BJ (cell line): ENCODE measurements at regions of chr16 and their contacts with region 1.

Region 1: GRCh38 chr16:17538927-17539326 is 68.2 kb upstream of the XYLT1 start:
- DNase-seq: no peak
- H3K4me3 ChIP-seq: no peak overlapping the region
- H3K27me3 ChIP-seq: no peaks in the 10 kb centered on the region
- CTCF ChIP-seq: no peak

Region 2: DNA sequence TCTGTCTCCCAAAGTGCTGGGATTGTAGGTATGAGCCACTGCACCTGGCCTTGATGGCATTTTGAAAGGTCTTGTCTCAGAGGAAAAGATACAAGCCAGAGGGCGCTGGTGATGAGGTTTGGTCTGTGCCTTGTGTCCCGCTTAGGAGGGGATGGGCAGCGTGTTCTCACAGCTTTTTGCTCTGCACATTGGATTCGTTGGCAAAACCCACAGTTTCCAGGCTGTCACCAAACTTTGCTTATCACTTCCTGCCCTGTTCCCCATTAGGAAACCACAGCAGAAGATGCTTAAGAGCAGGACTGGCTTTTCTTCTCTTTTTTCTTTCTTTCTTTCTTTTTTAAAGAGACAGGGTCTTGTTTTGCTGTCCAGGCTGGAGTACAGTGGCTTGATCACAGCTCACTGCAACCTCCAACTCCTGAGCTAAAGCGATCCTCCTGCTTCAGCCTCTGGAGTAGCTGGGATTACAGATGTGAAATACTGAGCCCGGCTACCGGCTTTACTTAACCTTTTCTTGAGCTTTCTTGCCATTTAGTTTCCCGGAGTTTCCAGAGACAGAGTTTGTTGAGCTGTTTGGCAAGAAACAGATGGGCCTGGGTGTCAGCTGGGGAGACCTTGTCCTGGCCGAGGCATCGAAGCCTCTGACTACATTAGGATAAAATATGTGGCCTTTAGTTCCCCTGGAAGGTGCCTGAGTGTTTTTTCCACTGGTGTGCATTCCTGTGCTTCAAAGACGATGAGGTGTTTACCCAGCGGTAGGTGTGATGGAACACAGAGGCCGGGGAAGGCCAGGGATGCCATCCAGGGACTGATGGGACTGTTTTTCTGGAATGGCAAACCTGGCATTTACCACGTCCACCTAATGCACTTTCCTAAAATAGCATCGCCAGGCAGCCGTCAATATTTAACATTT is 1476.6 kb before region 1 on chr16:
- CTCF ChIA-PET with region 1: no interaction called
- POLR2A ChIA-PET with region 1: no interaction called
- DNase-seq: no peak
- H3K4me3 ChIP-seq: no peak overlapping the region
- H3K27me3 ChIP-seq: no peaks in the 10 kb centered on the region
- CTCF ChIP-seq: peak; percentile 31; the same call in 1 of the 2 replicates

Region 3: GRCh38 chr16:17511340-17511739 is 27.6 kb before region 1 on chr16:
- CTCF ChIA-PET with region 1: no interaction called
- POLR2A ChIA-PET with region 1: interaction called, 21 read pairs
- DNase-seq: peak; percentile 87
- H3K4me3 ChIP-seq: no peak overlapping the region
- H3K27me3 ChIP-seq: no peaks in the 10 kb centered on the region
- CTCF ChIP-seq: no peak